ENCODE measurements at regions of chr12 and their contacts with region 1.

Region 1: DNA sequence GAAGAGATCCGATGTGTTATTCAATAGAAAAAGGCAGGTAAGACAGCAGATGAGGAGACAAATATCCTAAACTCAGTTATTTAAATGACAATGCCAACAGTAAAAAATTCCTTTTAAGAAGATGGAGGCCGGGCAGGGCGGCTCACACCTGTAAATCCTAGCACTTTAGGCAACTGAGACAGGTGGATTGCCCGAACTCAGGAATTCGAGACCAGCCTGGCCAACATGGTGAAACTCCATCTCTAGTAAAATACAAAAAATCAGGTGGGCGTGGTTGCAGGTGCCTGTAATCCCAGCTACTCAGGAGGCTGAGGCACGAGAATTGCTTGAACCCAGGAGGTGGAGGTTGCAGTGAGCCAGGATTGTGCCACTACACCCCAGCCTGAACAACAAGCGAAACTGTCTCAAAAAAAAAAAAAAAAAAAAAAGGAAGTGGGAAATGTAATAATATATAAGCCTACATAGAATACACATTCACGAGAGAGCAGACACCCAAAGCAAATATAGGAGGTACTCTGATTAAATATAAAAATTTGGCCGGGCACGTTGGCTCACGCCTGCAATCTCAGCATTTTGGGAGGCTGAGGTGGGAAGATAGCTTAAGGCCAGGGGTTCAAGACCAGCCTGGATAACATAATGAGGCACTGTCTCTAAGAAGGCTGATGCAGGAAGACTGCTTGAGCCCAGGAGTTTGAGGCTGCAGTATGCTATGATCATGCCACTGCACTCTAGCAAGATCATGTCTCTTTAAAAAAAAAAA is 19.0 kb downstream of the CORO1C start:
- DNase-seq: no peak
- ATAC-seq: no peak
- H3K4me3 ChIP-seq: no peak overlapping the region
- H3K27ac ChIP-seq: no peak overlapping the region
- H3K4me1 ChIP-seq: 0 out of 2 replicates have a peak, but pooled peaks cover 11% of the 10 kb centered on the region
- H3K27me3 ChIP-seq: no peaks in the 10 kb centered on the region
- CTCF ChIP-seq: no peak

Region 2: GRCh38 chr12:108511633-108512540 is 200.5 kb before region 1 on chr12:
- CTCF ChIA-PET with region 1: no interaction called
- POLR2A ChIA-PET with region 1: no interaction called
- in situ Hi-C with region 1: no loop called
- intact Hi-C with region 1: no loop called
- DNase-seq: peak; percentile 61
- ATAC-seq: no peak; the same call in 1 of the 2 replicates
- H3K4me3 ChIP-seq: no peak overlapping the region
- H3K27ac ChIP-seq: peak overlapping the region; percentile 32
- H3K4me1 ChIP-seq: peaks cover 13% of the 10 kb centered on the region
- H3K27me3 ChIP-seq: no peaks in the 10 kb centered on the region
- CTCF ChIP-seq: peak; percentile 90

Region 3: GRCh38 chr12:108649669-108650068 is 62.7 kb before region 1 on chr12:
- CTCF ChIA-PET with region 1: no interaction called
- POLR2A ChIA-PET with region 1: interaction called, 17 read pairs
- in situ Hi-C with region 1: no loop called
- intact Hi-C with region 1: no loop called
- DNase-seq: no peak
- ATAC-seq: no peak
- H3K4me3 ChIP-seq: no peak overlapping the region
- H3K27ac ChIP-seq: no peak overlapping the region
- H3K4me1 ChIP-seq: peaks cover 13% of the 10 kb centered on the region
- H3K27me3 ChIP-seq: no peaks in the 10 kb centered on the region
- CTCF ChIP-seq: no peak

Region 4: GRCh38 chr12:108731105-108731865 is 18.9 kb after region 1 on chr12 and contains the start of gene CORO1C:
- CTCF ChIA-PET with region 1: no interaction called
- POLR2A ChIA-PET with region 1: interaction called, 13 read pairs
- in situ Hi-C with region 1: no loop called
- intact Hi-C with region 1: no loop called
- DNase-seq: no peak
- ATAC-seq: peak; percentile 84
- H3K4me3 ChIP-seq: peak within 1 kb of the TSS; percentile 64 to 90
- H3K27ac ChIP-seq: peak within 1 kb of the TSS; percentile 94
- H3K4me1 ChIP-seq: peaks cover 27% of the 10 kb centered on the region
- H3K27me3 ChIP-seq: no peaks in the 10 kb centered on the region
- CTCF ChIP-seq: peak; percentile 87
- total RNA-seq, gene CORO1C: 165 TPM

Region 5: DNA sequence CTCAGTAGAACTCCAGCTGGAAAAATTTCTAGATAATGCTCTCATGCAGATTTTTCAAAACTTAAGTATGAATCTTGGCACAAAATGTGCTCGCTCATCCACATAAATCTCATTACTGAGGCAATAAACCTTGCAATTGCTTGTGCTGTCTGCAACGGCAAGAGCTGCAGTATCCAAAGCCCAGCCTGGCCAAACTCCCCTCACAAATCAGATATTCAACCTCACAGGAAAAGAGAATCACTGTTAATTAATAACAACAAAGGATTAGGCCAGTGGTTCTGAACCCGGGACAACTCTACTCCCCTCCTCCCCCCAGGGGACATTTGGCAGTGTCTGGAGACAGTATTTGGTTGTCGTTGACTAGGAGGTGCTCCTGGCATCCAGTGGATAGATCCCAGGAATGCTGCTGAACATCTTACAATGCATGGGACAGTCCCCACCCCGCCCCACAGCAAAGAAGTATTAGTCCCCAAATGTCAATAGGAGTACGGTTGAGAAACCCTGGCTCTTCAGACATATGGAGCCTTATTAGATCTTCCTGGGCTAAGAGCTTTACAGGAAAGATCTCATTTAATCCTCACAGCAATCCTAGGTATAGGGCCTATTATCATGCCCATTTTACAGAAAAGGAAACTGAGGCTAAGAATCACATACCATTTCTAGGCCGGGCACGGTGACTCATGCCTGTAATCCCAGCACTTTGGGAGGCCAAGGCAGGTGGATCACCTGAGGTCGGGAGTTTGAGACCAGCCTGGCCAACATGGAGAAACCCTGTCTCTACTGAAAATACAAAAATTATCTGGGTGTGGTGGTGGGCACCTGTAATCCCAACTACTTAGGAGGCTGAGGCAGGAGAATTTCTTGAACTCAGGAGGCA is 38.4 kb after region 1 on chr12:
- CTCF ChIA-PET with region 1: no interaction called
- POLR2A ChIA-PET with region 1: interaction called, 16 read pairs
- in situ Hi-C with region 1: no loop called
- intact Hi-C with region 1: no loop called
- DNase-seq: no peak
- ATAC-seq: no peak
- H3K4me3 ChIP-seq: no peak overlapping the region
- H3K27ac ChIP-seq: no peak overlapping the region
- H3K4me1 ChIP-seq: no peaks in the 10 kb centered on the region
- H3K27me3 ChIP-seq: no peaks in the 10 kb centered on the region
- CTCF ChIP-seq: no peak

Region 6: GRCh38 chr12:108967869-108968540 is 255.7 kb after region 1 on chr12:
- CTCF ChIA-PET with region 1: interaction called, 10 read pairs
- POLR2A ChIA-PET with region 1: no interaction called
- in situ Hi-C with region 1: no loop called
- intact Hi-C with region 1: no loop called
- DNase-seq: no peak
- ATAC-seq: peak; percentile 76
- H3K4me3 ChIP-seq: no peak overlapping the region
- H3K27ac ChIP-seq: no peak overlapping the region
- H3K4me1 ChIP-seq: no peaks in the 10 kb centered on the region
- H3K27me3 ChIP-seq: no peaks in the 10 kb centered on the region
- CTCF ChIP-seq: peak; percentile 70